ENCODE measurements at regions of chr10 and their contacts with region 1.

Region 1: GRCh38 chr10:77173615-77174461 is 463.8 kb downstream of the KCNMA1 start:
- DNase-seq: peak; percentile 81
- H3K4me3 ChIP-seq: no peak overlapping the region
- H3K27ac ChIP-seq: no peak overlapping the region
- H3K4me1 ChIP-seq: peaks cover 0 to 4% (median 0%) of the 10 kb centered on the region in 6 donors
- H3K27me3 ChIP-seq: peaks cover 0 to 13% (median 0%) of the 10 kb centered on the region in 7 donors
- CTCF ChIP-seq: peak; percentile 67 to 89 (median 81)
- POLR2A ChIP-seq: no peak

Region 2: DNA sequence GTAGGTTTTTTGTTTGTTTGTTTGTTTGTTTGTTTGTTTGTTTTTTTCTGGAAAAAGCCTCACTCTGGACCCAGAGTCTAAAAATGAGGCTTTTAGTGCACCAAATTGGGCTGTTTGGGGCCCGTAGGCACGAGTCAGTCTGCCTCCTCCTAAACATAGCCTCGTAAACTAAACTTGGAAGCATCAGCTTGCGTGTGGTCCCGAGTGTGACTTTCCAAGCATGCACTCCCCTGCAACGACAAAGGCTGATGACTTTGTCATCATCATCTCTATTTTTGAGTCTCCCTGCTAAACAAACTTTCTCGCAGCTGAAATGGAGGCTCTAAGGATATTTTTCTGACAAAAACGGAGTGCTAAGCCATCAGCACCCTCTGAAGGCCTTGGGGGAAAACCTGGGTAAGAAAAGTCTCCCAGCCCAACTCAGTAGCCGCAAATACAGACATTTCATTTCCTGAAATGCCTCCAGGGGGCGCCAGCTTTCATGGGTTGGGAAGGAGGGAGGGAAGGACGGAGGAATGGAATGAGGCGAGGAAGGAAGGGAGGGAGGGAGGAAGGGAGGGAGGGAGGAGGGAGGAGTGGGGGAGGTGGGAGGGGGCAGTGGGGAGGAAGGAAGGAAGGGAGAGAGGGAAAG is 217.9 kb after region 1 on chr10:
- intact Hi-C with region 1: loop called (anchors 10 kb)
- DNase-seq: no peak
- H3K4me3 ChIP-seq: no peak overlapping the region
- H3K27ac ChIP-seq: no peak overlapping the region
- H3K4me1 ChIP-seq: peaks cover 0 to 19% (median 9%) of the 10 kb centered on the region in 6 donors
- H3K27me3 ChIP-seq: peaks cover 0 to 47% (median 10%) of the 10 kb centered on the region in 7 donors
- CTCF ChIP-seq: peak in 8 of 11 experiments; percentile 18 to 65 (median 49)
- POLR2A ChIP-seq: no peak

Region 3: DNA sequence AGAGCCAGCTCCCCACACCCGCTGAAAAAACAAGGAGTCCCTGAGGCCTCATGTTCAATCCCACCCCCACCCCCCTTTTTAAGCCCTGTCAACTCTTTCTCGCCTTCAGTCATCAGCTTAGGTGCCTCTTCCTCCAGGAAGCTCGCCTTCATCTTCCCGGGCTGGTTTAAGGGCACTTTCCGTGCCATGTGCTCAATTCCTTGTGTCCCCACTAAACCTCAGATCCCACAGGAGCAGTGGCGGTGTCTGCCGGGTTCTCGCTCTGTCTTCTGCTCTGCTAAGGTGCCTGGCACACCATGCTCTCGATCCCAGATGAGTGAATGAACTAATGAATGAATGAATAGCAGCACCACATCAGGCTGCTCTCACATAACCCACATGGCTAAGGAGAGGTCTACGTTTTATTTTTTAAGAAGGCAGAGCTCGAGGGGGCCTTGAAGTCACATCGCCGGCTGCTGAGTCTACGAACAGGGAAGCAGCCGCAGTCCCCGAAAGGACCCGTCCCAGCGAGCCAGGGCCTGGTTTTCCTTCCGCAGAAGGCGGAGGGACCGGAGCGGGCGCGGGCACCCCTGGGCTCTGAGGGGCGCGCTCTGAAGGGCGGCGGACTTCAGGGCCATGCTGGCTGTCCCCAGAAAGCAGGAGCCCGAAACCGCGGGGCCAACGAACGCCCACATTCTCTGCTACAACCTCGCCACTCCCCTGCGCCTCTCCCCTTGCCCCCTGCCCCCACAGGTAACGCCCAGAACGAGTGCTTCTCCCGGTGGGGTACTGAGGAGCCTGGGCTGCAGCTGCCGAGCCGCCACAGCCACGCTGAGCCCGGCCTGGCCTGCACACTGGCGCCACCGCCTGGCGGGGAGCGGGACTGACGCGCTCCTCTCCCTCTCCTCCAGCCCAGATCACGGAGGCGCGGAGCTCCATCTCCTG is 537.2 kb after region 1 on chr10:
- intact Hi-C with region 1: loop called (anchors 10 kb)
- DNase-seq: peak; percentile 93
- H3K4me3 ChIP-seq: peak overlapping the region; percentile 11 to 66 (median 33)
- H3K27ac ChIP-seq: no peak overlapping the region
- H3K4me1 ChIP-seq: peaks cover 0 to 15% (median 12%) of the 10 kb centered on the region in 6 donors
- H3K27me3 ChIP-seq: peaks cover 0 to 68% (median 27%) of the 10 kb centered on the region in 7 donors
- CTCF ChIP-seq: peak; percentile 65 to 96 (median 92)
- POLR2A ChIP-seq: no peak